ENCODE measurements at regions of chr5 and their contacts with region 1.

Region 1: GRCh38 chr5:81751009-81751835 is at the start of gene SSBP2:
- DNase-seq: peak; percentile 100
- H3K4me3 Mint-ChIP-seq: peak within 1 kb of the TSS; percentile 91
- H3K27ac Mint-ChIP-seq: peak within 1 kb of the TSS; percentile 51
- H3K4me1 Mint-ChIP-seq: peaks cover 44% of the 10 kb centered on the region
- H3K27me3 Mint-ChIP-seq: no peaks in the 10 kb centered on the region
- CTCF ChIP-seq: no peak
- total RNA-seq, gene SSBP2: 15.5 and 18.9 TPM in 2 replicates

Region 2: DNA sequence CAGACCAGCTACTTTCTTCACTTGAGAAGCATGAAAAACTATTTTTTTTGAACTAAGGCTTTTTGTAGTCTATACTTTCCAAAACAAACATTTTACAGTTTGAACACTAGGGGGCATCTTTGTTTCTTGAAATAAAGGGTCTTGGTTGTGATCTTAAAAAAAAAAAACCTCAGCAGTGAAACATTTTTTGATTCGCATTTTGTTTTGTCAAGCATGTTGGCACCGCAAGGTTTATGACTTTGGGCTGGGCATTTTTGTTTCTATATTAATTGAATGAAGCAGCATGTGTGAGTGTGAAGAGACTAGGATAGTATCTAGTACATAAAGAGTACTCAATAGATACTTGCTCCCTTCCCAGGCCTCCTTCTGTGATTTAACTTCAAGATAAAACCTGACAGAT is 325.7 kb before region 1 on chr5:
- CTCF ChIA-PET with region 1: no interaction called
- intact Hi-C with region 1: loop called (anchors 2 kb)
- DNase-seq: no peak
- H3K4me3 Mint-ChIP-seq: no peak overlapping the region
- H3K27ac Mint-ChIP-seq: no peak overlapping the region
- H3K4me1 Mint-ChIP-seq: peaks cover 63% of the 10 kb centered on the region
- H3K27me3 Mint-ChIP-seq: no peaks in the 10 kb centered on the region
- CTCF ChIP-seq: peak; percentile 63

Region 3: DNA sequence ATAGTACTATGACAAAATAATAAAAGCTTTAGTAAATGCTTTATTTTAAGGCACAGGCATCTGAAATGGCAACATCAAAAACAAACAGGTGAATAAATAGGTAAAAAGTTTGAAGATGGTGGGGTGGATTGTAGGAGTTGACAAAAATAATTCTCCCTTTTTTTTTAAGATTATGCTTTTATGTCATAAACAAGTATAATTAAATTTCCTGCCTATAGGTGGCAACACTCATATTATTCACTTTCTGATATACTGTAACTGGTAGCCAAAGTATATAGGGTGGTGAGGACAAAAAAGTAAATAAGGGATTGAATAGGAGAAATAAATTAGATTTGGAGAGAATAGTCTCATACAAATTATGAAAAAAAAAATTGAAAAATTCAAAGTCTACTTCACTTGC is 237.2 kb before region 1 on chr5:
- CTCF ChIA-PET with region 1: interaction called, 3 read pairs
- intact Hi-C with region 1: loop called (anchors 2 kb)
- DNase-seq: no peak
- H3K4me3 Mint-ChIP-seq: no peak overlapping the region
- H3K27ac Mint-ChIP-seq: no peak overlapping the region
- H3K4me1 Mint-ChIP-seq: no peaks in the 10 kb centered on the region
- H3K27me3 Mint-ChIP-seq: no peaks in the 10 kb centered on the region
- CTCF ChIP-seq: no peak

Region 4: DNA sequence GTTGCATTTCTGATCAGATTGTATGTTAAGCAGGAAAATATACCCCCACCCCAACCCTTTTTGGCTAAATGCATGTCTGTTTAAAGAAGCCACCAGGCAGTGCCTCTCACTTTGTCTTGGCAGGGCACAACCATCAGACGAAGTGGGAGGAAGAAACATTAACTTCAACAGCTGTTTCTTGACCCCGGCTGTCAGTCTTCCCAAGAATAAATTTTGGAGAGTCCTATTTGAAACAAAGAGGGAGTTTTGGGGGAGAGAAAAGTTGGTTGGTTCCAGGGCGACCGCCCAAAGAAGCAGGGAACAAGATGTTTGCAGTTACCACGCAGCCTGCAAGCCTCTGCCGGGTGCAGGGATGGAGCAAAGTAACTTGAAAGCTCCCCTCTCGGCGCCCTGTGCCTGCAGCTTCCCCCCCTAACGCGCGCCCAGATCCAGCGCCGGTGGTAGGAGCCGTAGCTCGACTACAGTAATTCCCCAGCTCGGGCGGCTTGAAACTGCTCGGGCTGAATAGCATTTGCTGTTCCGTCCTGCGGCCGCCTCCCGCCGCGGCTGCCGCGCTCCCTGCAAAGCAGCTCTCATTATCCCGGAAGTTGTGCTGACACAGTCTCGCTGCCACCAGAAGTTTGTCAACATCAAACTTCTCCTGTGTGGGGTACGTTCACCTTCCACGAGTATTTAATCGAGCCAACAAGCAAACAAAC is 100.4 kb after region 1 on chr5:
- CTCF ChIA-PET with region 1: interaction called, 15 read pairs
- intact Hi-C with region 1: loop called (anchors 1 kb)
- DNase-seq: peak; percentile 95
- H3K4me3 Mint-ChIP-seq: peak overlapping the region; percentile 72
- H3K27ac Mint-ChIP-seq: peak overlapping the region; percentile 53
- H3K4me1 Mint-ChIP-seq: peaks cover 47% of the 10 kb centered on the region
- H3K27me3 Mint-ChIP-seq: no peaks in the 10 kb centered on the region
- CTCF ChIP-seq: no peak

Region 5: DNA sequence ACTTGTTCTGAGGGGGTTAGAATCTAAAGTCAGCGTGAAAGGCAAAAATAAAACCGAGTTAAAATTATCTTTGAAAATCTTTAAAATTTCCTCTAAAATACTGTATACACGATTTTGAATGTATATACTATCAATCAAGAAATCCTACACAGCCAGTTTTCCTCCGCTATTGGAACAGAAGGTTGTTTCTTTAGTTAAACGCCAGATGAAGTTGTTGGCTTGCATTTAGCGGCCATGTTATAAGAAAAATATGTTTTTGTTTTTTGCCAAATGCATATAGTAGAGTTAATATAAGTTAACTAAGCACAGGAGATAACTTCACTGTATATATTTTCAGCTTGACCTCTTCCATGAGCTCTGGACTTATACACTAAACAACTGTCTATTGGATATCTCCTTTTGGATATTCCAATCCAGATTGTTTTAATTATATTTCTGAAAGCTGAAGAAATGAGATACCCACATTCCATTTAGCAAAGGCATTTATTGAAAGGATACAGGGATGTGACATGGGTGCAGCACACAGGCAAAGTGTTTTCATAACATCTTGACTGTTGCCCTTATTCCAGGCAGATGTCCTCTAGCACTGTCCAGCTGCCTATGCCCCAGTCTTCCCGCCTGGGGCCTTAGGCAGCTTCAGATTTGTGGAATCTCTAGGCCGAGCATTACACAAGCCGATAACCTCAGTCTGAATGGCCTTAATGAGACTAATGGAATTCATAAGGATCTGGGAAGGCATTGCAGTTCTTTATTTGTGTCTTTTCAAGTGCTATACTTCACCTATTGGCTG is 210.6 kb after region 1 on chr5:
- CTCF ChIA-PET with region 1: no interaction called
- intact Hi-C with region 1: no loop called
- DNase-seq: no peak
- H3K4me3 Mint-ChIP-seq: no peak overlapping the region
- H3K27ac Mint-ChIP-seq: no peak overlapping the region
- H3K4me1 Mint-ChIP-seq: no peaks in the 10 kb centered on the region
- H3K27me3 Mint-ChIP-seq: no peaks in the 10 kb centered on the region
- CTCF ChIP-seq: no peak

Region 6: GRCh38 chr5:82107267-82107666 is 356.0 kb after region 1 on chr5:
- CTCF ChIA-PET with region 1: no interaction called
- intact Hi-C with region 1: loop called (anchors 10 kb)
- DNase-seq: peak; percentile 11
- H3K4me3 Mint-ChIP-seq: no peak overlapping the region
- H3K27ac Mint-ChIP-seq: no peak overlapping the region
- H3K4me1 Mint-ChIP-seq: no peaks in the 10 kb centered on the region
- H3K27me3 Mint-ChIP-seq: no peaks in the 10 kb centered on the region
- CTCF ChIP-seq: peak; percentile 54

Region 7: GRCh38 chr5:82225525-82226172 is 474.4 kb after region 1 on chr5:
- CTCF ChIA-PET with region 1: no interaction called
- intact Hi-C with region 1: loop called (anchors 10 kb)
- DNase-seq: peak; percentile 81
- H3K4me3 Mint-ChIP-seq: no peak overlapping the region
- H3K27ac Mint-ChIP-seq: no peak overlapping the region
- H3K4me1 Mint-ChIP-seq: no peaks in the 10 kb centered on the region
- H3K27me3 Mint-ChIP-seq: no peaks in the 10 kb centered on the region
- CTCF ChIP-seq: peak; percentile 85

Measured in Calu3 (cell line).